ENCODE measurements at regions of chr2 and their contacts with region 1.

Region 1: DNA sequence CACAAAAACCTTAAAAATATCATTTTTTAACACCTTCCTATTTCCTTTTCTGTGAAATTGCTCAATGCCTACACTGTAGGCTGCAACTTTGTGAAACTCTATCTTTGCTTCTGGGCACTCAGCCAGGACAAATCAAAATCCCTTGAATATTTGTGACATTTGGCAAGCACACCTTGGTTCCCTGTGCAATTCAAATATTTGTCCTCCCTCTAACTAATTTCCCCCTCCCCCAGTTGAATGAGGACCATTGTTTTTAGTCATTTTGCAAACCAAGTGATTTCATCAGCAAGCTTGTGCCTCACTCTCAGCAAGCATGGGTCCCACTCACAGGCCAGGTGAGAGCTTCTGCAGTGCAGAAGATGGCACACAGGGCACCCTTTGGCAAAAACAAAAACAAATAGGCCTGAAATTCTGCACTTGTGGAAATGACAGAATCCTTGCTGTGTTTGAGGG is 541.5 kb downstream of the CNTNAP5 start:
- DNase-seq: peak; percentile 99
- ATAC-seq: peak; percentile 89
- H3K4me3 ChIP-seq: no peak overlapping the region
- H3K27ac ChIP-seq: peak overlapping the region; percentile 60
- H3K4me1 ChIP-seq: peaks cover 63% of the 10 kb centered on the region
- H3K27me3 ChIP-seq: no peaks in the 10 kb centered on the region
- CTCF ChIP-seq: no peak
- EP300 ChIP-seq: peak; percentile 89 to 97; a peak in 3 of 4 replicates
- POLR2A ChIP-seq: no peak
- RAD21 ChIP-seq: no peak

Region 2: GRCh38 chr2:124607679-124608078 is 41.1 kb after region 1 on chr2:
- CTCF ChIA-PET with region 1: no interaction called
- POLR2A ChIA-PET with region 1: interaction called, 3 read pairs
- in situ Hi-C with region 1: no loop called
- intact Hi-C with region 1: loop called (anchors 5 kb)
- DNase-seq: peak; percentile 23
- ATAC-seq: peak; percentile 57
- H3K4me3 ChIP-seq: no peak overlapping the region
- H3K27ac ChIP-seq: no peak overlapping the region
- H3K4me1 ChIP-seq: no peaks in the 10 kb centered on the region
- H3K27me3 ChIP-seq: no peaks in the 10 kb centered on the region
- CTCF ChIP-seq: no peak
- EP300 ChIP-seq: no peak
- POLR2A ChIP-seq: no peak
- RAD21 ChIP-seq: no peak

Region 3: GRCh38 chr2:124810132-124810531 is 243.6 kb after region 1 on chr2:
- CTCF ChIA-PET with region 1: no interaction called
- POLR2A ChIA-PET with region 1: no interaction called
- in situ Hi-C with region 1: no loop called
- intact Hi-C with region 1: loop called (anchors 1 kb)
- DNase-seq: peak; percentile 60
- ATAC-seq: peak; percentile 95
- H3K4me3 ChIP-seq: no peak overlapping the region
- H3K27ac ChIP-seq: no peak overlapping the region
- H3K4me1 ChIP-seq: no peaks in the 10 kb centered on the region
- H3K27me3 ChIP-seq: no peaks in the 10 kb centered on the region
- CTCF ChIP-seq: peak; percentile 79
- EP300 ChIP-seq: no peak
- POLR2A ChIP-seq: no peak
- RAD21 ChIP-seq: peak; percentile 45